Psoas muscle (tissue), 8 donors: ENCODE measurements at regions of chr6 and their contacts with region 1.

Region 1: GRCh38 chr6:14929291-14929690 is 316.6 kb upstream of the JARID2 start:
- DNase-seq: no peak
- ATAC-seq: no peak
- H3K4me3 ChIP-seq: no peak overlapping the region
- H3K27ac ChIP-seq: no peak overlapping the region
- H3K4me1 ChIP-seq: peaks cover 22% of the 10 kb centered on the region
- H3K27me3 ChIP-seq: no peaks in the 10 kb centered on the region
- CTCF ChIP-seq: no peak

Region 2: GRCh38 chr6:15001326-15001910 is 72.1 kb after region 1 on chr6:
- intact Hi-C with region 1: loop called in 1 of 2 experiments (anchors 2 kb)
- DNase-seq: no peak
- ATAC-seq: no peak
- H3K4me3 ChIP-seq: no peak overlapping the region
- H3K27ac ChIP-seq: no peak overlapping the region
- H3K4me1 ChIP-seq: peaks cover 10% of the 10 kb centered on the region
- H3K27me3 ChIP-seq: no peaks in the 10 kb centered on the region
- CTCF ChIP-seq: no peak